ENCODE measurements at regions of chr12 and their contacts with region 1.

Region 1: DNA sequence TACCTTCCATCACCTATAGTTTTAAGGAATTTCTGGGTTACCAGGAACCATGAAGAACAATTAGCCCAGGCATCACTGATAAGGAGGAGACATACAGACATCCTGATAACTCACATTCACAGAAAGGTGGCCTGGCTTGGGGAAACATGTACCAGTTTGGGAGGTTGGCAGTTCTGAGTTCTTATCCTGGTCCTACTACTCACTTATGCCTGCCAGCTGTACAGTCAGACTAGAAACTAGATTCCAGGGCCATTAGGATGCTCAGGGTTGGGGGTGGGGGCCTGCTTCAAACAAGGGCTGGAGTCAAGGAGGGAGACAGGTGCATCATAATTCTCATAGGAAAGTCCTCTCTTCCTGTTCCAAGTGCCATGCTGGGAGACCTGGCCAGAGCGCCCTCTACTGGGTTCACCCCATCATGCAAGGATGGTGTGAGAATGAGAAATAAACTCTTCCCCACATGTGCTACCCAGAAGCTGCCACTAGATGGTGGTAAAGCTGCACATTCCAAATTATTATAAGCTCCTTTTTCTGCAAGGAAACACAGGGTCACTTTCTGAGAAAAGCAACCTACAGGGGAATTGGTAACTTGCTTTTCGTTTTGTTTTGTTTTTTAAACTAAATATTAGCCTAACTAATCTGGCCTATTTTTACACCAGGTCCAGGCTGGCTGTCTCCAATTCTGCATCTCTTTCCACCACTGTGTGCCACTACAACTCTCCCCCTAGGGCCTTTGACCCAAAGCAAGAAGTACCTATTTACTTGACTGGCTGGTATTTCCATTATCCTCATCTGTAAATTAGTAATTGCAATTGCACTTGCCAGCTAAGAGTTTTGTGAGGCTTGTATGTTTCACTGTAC is 14.5 kb downstream of the OAS2 start:
- DNase-seq: peak; percentile 29 to 91
- H3K4me3 ChIP-seq: no peak overlapping the region
- H3K27ac ChIP-seq: no peak overlapping the region
- H3K4me1 ChIP-seq: no peaks in the 10 kb centered on the region; a peak in 1 of 7 replicates
- H3K27me3 ChIP-seq: no peaks in the 10 kb centered on the region
- CTCF ChIP-seq: peak; percentile 90 to 99 (median 99)
- EP300 ChIP-seq: no peak
- POLR2A ChIP-seq: no peak
- RAD21 ChIP-seq: peak; percentile 89 to 93

Region 2: GRCh38 chr12:113019041-113019440 is 26.3 kb after region 1 on chr12:
- CTCF ChIA-PET with region 1: interaction called, 202 read pairs
- POLR2A ChIA-PET with region 1: no interaction called
- DNase-seq: no peak
- H3K4me3 ChIP-seq: no peak overlapping the region
- H3K27ac ChIP-seq: no peak overlapping the region
- H3K4me1 ChIP-seq: no peaks in the 10 kb centered on the region
- H3K27me3 ChIP-seq: no peaks in the 10 kb centered on the region; a peak in 1 of 7 replicates
- CTCF ChIP-seq: no peak
- EP300 ChIP-seq: no peak
- POLR2A ChIP-seq: no peak
- RAD21 ChIP-seq: no peak

Region 3: DNA sequence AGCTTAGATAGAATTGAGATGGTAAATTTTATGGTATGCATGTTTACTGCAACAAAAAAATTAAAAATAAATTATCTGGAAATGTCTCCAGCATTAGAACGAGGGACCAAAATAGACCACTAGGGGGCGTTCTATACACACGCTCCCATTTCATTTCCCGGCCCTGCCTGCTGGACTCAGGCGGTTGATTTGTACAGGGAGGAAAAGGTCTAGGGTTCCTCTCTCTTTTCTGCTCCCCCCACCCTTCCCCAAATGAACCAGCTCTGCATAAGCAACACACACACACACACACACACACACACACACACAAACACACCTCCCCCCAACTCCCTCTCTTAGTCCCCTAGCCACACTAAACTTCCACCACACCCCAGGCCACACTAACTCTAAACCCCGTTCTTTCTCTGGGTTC is 56.0 kb after region 1 on chr12:
- CTCF ChIA-PET with region 1: interaction called, 15 read pairs
- POLR2A ChIA-PET with region 1: no interaction called
- DNase-seq: no peak
- H3K4me3 ChIP-seq: no peak overlapping the region
- H3K27ac ChIP-seq: no peak overlapping the region
- H3K4me1 ChIP-seq: no peaks in the 10 kb centered on the region; a peak in 2 of 7 replicates
- H3K27me3 ChIP-seq: no peaks in the 10 kb centered on the region; a peak in 2 of 7 replicates
- CTCF ChIP-seq: peak; percentile 38 to 86 (median 68)
- EP300 ChIP-seq: no peak
- POLR2A ChIP-seq: no peak
- RAD21 ChIP-seq: peak; percentile 87 to 91

Region 4: DNA sequence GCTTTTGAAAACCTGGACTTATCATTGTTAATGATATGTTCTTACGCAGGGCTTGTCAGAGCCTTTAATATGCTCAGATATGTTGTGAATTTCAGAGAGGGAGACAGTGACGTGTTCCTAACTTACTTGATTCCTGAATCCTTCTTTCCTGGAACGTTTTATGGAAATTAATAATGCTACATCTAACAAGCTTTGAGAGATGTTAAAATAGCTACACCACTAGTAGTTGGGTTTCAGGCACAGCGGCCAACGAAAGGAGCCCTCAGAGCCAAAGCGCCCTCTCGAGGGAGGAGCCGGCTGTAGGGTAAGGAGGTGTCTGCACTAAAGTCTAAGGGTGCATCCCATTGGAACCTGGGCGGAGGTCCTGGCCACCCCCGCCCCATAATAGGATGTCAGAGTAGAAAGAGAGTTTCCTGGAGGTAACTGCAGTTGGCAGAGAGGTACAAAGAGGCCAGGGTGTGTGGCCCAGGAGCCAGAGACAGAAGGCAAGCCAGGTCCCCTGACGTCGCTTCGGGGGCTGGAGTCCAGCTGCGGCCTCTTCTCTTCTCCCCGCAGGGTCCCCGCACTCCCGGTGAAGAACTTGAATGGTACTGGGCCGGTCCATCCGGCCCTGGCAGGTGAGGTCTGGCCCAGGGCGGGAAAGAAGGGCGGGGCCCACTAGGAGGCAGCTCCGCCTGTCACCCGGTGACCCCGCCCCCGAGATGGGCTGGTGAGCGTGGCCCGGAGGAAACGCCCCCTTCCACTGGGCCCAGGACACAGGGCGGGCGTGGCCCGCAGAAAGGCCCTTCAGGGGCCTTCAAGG is 100.0 kb after region 1 on chr12:
- CTCF ChIA-PET with region 1: interaction called, 67 read pairs
- POLR2A ChIA-PET with region 1: no interaction called
- DNase-seq: peak in 1 of 2 experiments; percentile 92
- H3K4me3 ChIP-seq: peak overlapping the region; percentile 39 to 64 (median 44)
- H3K27ac ChIP-seq: no peak overlapping the region
- H3K4me1 ChIP-seq: peaks cover 0 to 8% (median 3%) of the 10 kb centered on the region in 4 experiments; a peak in 5 of 7 replicates
- H3K27me3 ChIP-seq: no peaks in the 10 kb centered on the region
- CTCF ChIP-seq: peak; percentile 34 to 58 (median 57); a peak in 3 of 4 replicates
- EP300 ChIP-seq: no peak
- POLR2A ChIP-seq: 0 out of 3 replicates have a peak, but pooled peaks of 1 of the 2 experiments have one; percentile 28
- RAD21 ChIP-seq: peak; percentile 41 to 56

Region 5: DNA sequence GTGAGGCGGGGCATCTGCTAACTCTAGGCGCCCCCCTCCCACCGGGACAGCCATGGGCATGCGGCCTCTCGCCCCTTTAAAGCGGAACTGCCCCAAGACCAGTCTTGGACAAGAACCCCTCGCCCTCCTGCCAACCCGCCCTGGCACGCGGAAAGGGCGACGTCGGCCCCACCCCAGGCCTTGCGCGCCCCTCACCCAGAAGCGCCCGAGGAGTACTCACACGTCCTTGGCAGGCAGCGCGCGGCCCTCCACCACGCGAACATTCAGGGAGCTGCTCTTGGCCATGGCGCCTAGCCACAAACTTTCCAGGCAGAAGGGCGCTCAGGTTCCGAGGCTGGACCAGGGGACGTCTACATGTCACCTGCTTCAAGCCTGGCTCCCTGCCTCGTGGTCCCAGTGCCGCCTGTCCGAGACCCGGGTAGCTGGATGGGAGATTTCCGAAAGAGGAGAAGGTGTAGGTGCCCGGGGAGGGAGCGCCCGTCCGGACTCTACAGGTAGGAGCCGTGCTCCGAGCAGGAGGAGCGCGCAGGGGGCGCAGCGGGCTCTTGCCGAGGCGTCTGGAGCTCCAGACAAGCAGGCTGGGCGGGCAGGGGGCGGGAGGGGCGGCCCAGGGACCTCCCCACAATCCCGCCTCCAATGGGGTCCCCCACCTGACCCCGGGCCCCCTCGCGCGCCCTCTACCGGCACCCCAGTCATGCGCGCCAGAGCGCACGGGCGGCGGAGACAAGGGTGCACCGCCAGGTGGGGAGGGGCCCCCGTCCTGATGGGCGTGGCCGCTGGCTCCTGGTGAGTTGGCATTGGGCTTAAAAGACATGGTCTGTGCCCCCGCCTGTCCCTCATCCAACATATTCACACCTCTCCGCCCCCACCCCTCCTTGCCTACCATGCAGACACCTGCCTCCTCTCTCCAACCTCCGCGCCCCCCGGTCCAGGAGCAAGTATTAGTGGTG is 142.7 kb after region 1 on chr12 and contains the start of gene RASAL1:
- CTCF ChIA-PET with region 1: interaction called, 13 read pairs
- POLR2A ChIA-PET with region 1: no interaction called
- DNase-seq: peak; percentile 70 to 99
- H3K4me3 ChIP-seq: peak within 1 kb of the TSS; percentile 39 to 62 (median 50)
- H3K27ac ChIP-seq: no peak within 1 kb of the TSS
- H3K4me1 ChIP-seq: peaks cover 0 to 13% (median 9%) of the 10 kb centered on the region in 4 experiments; a peak in 6 of 7 replicates
- H3K27me3 ChIP-seq: peaks cover 0 to 13% (median 6%) of the 10 kb centered on the region in 4 experiments; a peak in 5 of 7 replicates
- CTCF ChIP-seq: peak; percentile 64 to 86 (median 84)
- EP300 ChIP-seq: no peak
- POLR2A ChIP-seq: 0 out of 3 replicates have a peak, but pooled peaks of 1 of the 2 experiments have one; percentile 25
- RAD21 ChIP-seq: peak in 1 of 2 experiments; percentile 39; a peak in 2 of 4 replicates
- total RNA-seq, gene RASAL1: 5.0 and 6.4 TPM in 2 replicates

Region 6: GRCh38 chr12:113203852-113204760 is 211.3 kb after region 1 on chr12:
- CTCF ChIA-PET with region 1: no interaction called
- POLR2A ChIA-PET with region 1: no interaction called
- DNase-seq: no peak
- H3K4me3 ChIP-seq: no peak overlapping the region
- H3K27ac ChIP-seq: no peak overlapping the region
- H3K4me1 ChIP-seq: no peaks in the 10 kb centered on the region; a peak in 1 of 7 replicates
- H3K27me3 ChIP-seq: no peaks in the 10 kb centered on the region
- CTCF ChIP-seq: no peak
- EP300 ChIP-seq: no peak
- POLR2A ChIP-seq: no peak
- RAD21 ChIP-seq: no peak

Region 7: GRCh38 chr12:113285679-113286610 is 293.2 kb after region 1 on chr12:
- CTCF ChIA-PET with region 1: no interaction called
- POLR2A ChIA-PET with region 1: no interaction called
- DNase-seq: no peak
- H3K4me3 ChIP-seq: no peak overlapping the region
- H3K27ac ChIP-seq: no peak overlapping the region; the same call in 1 of the 2 replicates
- H3K4me1 ChIP-seq: no peaks in the 10 kb centered on the region
- H3K27me3 ChIP-seq: no peaks in the 10 kb centered on the region
- CTCF ChIP-seq: no peak
- EP300 ChIP-seq: no peak
- POLR2A ChIP-seq: no peak
- RAD21 ChIP-seq: no peak

Measured in H1 (cell line).